ENCODE measurements at regions of chr6 and their contacts with region 1.

Region 1: GRCh38 chr6:33271458-33272274 is at the starts of genes RPS18 and VPS52:
- DNase-seq: peak; percentile 99
- ATAC-seq: peak; percentile 86
- H3K4me3 ChIP-seq: peak within 1 kb of the TSS; percentile 81 to 95 (median 86)
- H3K4me3 Mint-ChIP-seq: peak within 1 kb of the TSS; percentile 94
- H3K27ac ChIP-seq: peak within 1 kb of the TSS; percentile 89 to 94
- H3K27ac Mint-ChIP-seq: peak within 1 kb of the TSS; percentile 99
- H3K4me1 ChIP-seq: peaks cover 47 to 54% of the 10 kb centered on the region in 2 donors
- H3K4me1 Mint-ChIP-seq: peaks cover 62% of the 10 kb centered on the region
- H3K27me3 ChIP-seq: no peaks in the 10 kb centered on the region
- H3K27me3 Mint-ChIP-seq: no peaks in the 10 kb centered on the region
- CTCF ChIP-seq: no peak
- total RNA-seq, gene RPS18: 3,593 and 3,830 TPM in 2 replicates
- total RNA-seq, gene VPS52: 100 and 108 TPM in 2 replicates

Region 2: DNA sequence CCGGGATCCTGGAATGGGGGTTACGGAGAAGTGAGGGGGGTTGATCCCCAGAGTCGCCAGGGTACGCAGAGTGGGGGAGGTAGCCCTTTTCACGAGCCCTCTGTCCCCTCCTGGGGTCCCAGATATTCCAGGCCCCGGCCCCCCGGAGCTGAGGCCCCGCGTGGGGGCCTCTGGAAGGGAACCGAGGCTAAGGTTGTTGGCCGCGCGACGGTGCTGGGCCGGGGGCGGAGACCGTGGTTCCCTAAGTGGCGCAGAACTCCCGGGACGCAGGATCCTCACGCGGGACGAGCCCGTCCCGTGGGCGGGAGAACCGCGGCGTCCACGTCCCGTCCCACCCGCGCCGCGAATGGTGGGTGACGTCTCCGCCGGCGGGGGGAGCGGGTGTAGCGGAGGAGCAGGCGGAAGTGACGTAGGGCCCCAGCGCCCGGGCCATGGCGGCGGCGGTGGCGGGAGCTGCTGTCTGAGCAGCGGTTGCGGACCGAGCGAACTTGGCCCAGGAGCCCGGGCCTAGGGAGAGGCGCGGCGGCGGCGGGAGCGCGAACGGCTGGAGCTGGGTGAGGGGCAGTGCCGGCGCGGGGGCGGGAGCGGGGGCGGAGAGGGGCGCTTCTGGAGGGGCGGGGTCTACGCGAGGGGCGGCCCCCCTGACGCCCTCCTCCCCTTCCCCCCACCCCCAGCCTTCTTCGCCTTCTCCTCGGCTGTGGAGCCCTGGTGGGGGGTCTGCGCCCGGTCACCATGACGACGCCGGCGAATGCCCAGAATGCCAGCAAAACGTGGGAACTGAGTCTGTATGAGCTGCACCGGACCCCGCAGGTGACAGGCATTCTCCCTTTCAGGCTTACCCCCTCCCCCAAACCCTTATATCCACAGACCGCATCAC is 63.3 kb before region 1 on chr6 and contains the start of gene RING1:
- CTCF ChIA-PET with region 1: no interaction called
- POLR2A ChIA-PET with region 1: interaction called, 11 read pairs
- intact Hi-C with region 1: no loop called
- DNase-seq: peak; percentile 92
- ATAC-seq: peak; percentile 54
- H3K4me3 ChIP-seq: peak within 1 kb of the TSS; percentile 71 to 99 (median 90)
- H3K4me3 Mint-ChIP-seq: peak within 1 kb of the TSS; percentile 88
- H3K27ac ChIP-seq: peak within 1 kb of the TSS; percentile 87 to 91
- H3K27ac Mint-ChIP-seq: peak within 1 kb of the TSS; percentile 90
- H3K4me1 ChIP-seq: peaks cover 31 to 45% of the 10 kb centered on the region in 2 donors
- H3K4me1 Mint-ChIP-seq: peaks cover 40% of the 10 kb centered on the region
- H3K27me3 ChIP-seq: peaks cover 0 to 10% (median 8%) of the 10 kb centered on the region in 4 experiments
- H3K27me3 Mint-ChIP-seq: peaks cover 9% of the 10 kb centered on the region
- CTCF ChIP-seq: no peak
- total RNA-seq, gene RING1: 43.4 and 44.2 TPM in 2 replicates

Region 3: GRCh38 chr6:33288921-33289748 is 17.5 kb after region 1 on chr6 and contains the starts of genes PFDN6 and WDR46:
- CTCF ChIA-PET with region 1: interaction called, 17 read pairs
- POLR2A ChIA-PET with region 1: interaction called, 39 read pairs
- intact Hi-C with region 1: loop called (anchors 1 kb)
- DNase-seq: peak; percentile 93
- ATAC-seq: peak; percentile 96
- H3K4me3 ChIP-seq: peak within 1 kb of the TSS; percentile 78 to 99 (median 86)
- H3K4me3 Mint-ChIP-seq: peak within 1 kb of the TSS; percentile 93
- H3K27ac ChIP-seq: peak within 1 kb of the TSS; percentile 42 to 68
- H3K27ac Mint-ChIP-seq: peak within 1 kb of the TSS; percentile 86
- H3K4me1 ChIP-seq: peaks cover 19 to 25% of the 10 kb centered on the region in 2 donors
- H3K4me1 Mint-ChIP-seq: peaks cover 38% of the 10 kb centered on the region
- H3K27me3 ChIP-seq: no peaks in the 10 kb centered on the region
- H3K27me3 Mint-ChIP-seq: no peaks in the 10 kb centered on the region
- CTCF ChIP-seq: no peak
- total RNA-seq, gene PFDN6: 44.7 and 51.1 TPM in 2 replicates
- total RNA-seq, gene WDR46: 66.4 and 77.2 TPM in 2 replicates

Region 4: DNA sequence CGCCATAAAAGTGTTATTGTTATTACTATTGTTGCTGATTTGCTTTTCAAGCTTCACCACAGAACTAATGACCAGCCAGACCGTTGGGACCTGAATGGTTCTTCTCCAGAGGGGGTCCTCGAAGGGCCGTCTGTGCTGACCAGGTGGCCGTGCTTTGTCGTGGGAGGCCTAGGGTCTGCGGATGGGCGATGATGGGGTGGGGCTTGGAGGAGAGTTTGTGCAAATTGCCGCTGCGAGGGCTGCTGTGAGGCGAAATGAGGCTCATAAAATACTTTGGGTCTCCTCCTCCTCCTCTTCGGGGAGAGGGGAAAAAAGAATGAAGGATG is 51.9 kb after region 1 on chr6:
- CTCF ChIA-PET with region 1: interaction called, 12 read pairs
- POLR2A ChIA-PET with region 1: interaction called, 3 read pairs
- intact Hi-C with region 1: loop called (anchors 1 kb)
- DNase-seq: no peak
- ATAC-seq: no peak
- H3K4me3 ChIP-seq: peak overlapping the region; percentile 72 to 93 (median 85)
- H3K4me3 Mint-ChIP-seq: peak overlapping the region; percentile 91
- H3K27ac ChIP-seq: peak overlapping the region; percentile 85 to 95
- H3K27ac Mint-ChIP-seq: peak overlapping the region; percentile 93
- H3K4me1 ChIP-seq: peaks cover 43 to 63% of the 10 kb centered on the region in 2 donors
- H3K4me1 Mint-ChIP-seq: peaks cover 59% of the 10 kb centered on the region
- H3K27me3 ChIP-seq: no peaks in the 10 kb centered on the region
- H3K27me3 Mint-ChIP-seq: no peaks in the 10 kb centered on the region
- CTCF ChIP-seq: no peak

Region 5: GRCh38 chr6:33417903-33418689 is 146.4 kb after region 1 on chr6 and contains the start of gene CUTA:
- CTCF ChIA-PET with region 1: interaction called, 3 read pairs
- POLR2A ChIA-PET with region 1: interaction called, 3 read pairs
- intact Hi-C with region 1: loop called (anchors 1 kb)
- DNase-seq: peak; percentile 100
- ATAC-seq: peak; percentile 89
- H3K4me3 ChIP-seq: peak within 1 kb of the TSS; percentile 58 to 84 (median 69)
- H3K4me3 Mint-ChIP-seq: peak within 1 kb of the TSS; percentile 96
- H3K27ac ChIP-seq: peak within 1 kb of the TSS; percentile 89 to 93
- H3K27ac Mint-ChIP-seq: peak within 1 kb of the TSS; percentile 97
- H3K4me1 ChIP-seq: peaks cover 40 to 65% of the 10 kb centered on the region in 2 donors
- H3K4me1 Mint-ChIP-seq: peaks cover 63% of the 10 kb centered on the region
- H3K27me3 ChIP-seq: peaks cover 0 to 3% (median 0%) of the 10 kb centered on the region in 4 experiments
- H3K27me3 Mint-ChIP-seq: peaks cover 4% of the 10 kb centered on the region
- CTCF ChIP-seq: peak; percentile 28
- total RNA-seq, gene CUTA: 134 and 137 TPM in 2 replicates